ENCODE measurements at regions of chr15 and their contacts with region 1.

Region 1: GRCh38 chr15:41774062-41774881 is at the start of gene MAPKBP1:
- DNase-seq: peak; percentile 98
- H3K4me3 Mint-ChIP-seq: peak within 1 kb of the TSS; percentile 85
- H3K27ac Mint-ChIP-seq: peak within 1 kb of the TSS; percentile 91
- H3K4me1 Mint-ChIP-seq: peaks cover 56% of the 10 kb centered on the region
- H3K27me3 Mint-ChIP-seq: no peaks in the 10 kb centered on the region
- total RNA-seq, gene MAPKBP1: 13.8 to 13.9 TPM

Region 2: DNA sequence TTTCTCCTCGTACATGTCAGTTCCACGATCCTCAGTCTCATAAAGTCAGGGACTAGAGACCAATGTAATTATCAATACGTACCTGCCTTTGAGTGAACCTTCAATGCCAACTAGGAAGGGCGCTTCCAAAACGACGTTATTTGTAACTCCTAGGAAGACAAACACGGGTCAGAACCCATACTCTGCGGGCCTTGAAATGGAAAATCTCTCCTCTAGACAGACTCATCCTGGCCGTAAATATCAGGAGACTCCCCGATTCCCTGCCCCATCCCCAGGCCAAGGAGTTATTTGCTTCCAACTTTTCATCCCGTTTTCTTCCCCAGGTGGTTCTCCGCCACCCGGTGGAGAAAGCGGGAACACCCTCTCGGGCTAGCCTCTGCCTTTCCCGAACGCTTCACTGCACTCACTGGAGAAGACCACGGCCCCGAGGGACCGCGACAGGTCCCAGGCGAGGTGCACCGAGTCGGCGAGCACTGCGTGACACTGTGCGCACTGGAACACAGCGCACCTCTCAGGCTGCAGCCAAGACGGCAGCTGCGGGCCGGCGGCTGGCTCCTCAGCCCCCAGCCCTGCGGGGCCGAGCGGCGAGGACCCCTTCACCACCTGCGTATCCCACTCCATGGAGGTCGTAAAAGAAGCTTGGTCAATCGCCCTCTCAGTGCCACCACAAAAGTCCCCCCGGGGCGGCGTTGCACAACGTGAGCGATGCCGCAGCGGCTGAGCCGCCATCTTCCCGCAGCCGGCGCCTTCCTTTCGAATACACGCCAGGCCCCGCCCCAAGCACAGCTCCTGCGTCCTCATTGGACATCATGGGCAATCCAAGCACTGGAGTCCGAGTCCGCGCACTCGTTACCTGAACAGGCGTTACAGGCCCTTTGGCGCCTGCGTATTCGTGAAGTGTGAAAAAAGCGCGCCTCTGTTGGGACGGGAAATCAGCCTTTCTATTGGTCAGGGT is 442.2 kb before region 1 on chr15 and contains the start of gene OIP5:
- CTCF ChIA-PET with region 1: no interaction called
- intact Hi-C with region 1: loop called (anchors 1 kb)
- DNase-seq: peak; percentile 100
- H3K4me3 Mint-ChIP-seq: peak within 1 kb of the TSS; percentile 100
- H3K27ac Mint-ChIP-seq: peak within 1 kb of the TSS; percentile 98
- H3K4me1 Mint-ChIP-seq: peaks cover 26% of the 10 kb centered on the region
- H3K27me3 Mint-ChIP-seq: no peaks in the 10 kb centered on the region
- total RNA-seq, gene OIP5: 9.5 to 10.7 TPM

Region 3: DNA sequence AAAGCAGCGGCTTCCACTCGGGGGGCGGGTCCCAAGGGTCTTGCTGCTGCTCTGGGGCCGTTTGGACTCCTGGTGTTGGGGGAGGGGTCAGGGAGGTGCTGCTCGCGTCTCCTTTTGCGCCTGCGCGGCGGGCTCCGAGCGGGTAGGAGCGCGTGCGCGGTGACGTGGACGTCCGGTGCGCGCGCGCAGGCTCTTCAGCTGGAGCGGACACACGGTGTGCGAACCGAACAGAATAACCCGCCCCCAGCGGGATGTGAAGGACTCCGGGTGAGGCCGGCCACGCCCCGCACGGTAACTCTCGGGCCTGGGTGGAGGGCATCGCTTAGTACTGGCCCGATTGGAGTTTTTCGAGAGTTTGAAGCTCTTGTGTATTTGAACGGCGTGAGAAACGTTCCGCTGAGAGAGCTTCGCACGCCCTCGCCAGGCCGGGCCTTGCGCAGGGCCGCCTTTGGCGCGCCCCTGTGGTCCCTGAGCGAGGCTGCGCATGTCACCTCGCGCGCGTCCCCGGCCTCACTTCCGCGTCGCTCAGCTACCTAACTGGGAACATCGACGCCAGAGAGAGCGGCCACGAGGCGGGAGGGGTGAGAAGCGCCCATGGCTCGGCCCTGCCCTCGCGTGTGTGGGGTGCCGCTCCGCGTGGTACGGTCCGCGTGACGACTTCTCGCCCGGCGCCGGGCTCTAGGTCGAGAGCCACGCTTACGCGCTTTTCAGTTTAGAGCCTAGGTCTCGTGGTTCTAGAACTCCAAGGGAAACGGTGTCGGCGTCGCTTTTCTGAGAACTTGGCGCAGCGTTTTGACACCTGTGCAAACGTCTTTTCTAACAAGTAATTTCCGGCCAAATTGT is 113.8 kb before region 1 on chr15 and contains the start of gene MGA:
- CTCF ChIA-PET with region 1: interaction called, 3 read pairs
- intact Hi-C with region 1: loop called (anchors 1 kb)
- DNase-seq: peak; percentile 84
- H3K4me3 Mint-ChIP-seq: peak within 1 kb of the TSS; percentile 95
- H3K27ac Mint-ChIP-seq: peak within 1 kb of the TSS; percentile 81
- H3K4me1 Mint-ChIP-seq: peaks cover 32% of the 10 kb centered on the region
- H3K27me3 Mint-ChIP-seq: peaks cover 2% of the 10 kb centered on the region
- total RNA-seq, gene MGA: 27.4 to 28.3 TPM

Region 4: DNA sequence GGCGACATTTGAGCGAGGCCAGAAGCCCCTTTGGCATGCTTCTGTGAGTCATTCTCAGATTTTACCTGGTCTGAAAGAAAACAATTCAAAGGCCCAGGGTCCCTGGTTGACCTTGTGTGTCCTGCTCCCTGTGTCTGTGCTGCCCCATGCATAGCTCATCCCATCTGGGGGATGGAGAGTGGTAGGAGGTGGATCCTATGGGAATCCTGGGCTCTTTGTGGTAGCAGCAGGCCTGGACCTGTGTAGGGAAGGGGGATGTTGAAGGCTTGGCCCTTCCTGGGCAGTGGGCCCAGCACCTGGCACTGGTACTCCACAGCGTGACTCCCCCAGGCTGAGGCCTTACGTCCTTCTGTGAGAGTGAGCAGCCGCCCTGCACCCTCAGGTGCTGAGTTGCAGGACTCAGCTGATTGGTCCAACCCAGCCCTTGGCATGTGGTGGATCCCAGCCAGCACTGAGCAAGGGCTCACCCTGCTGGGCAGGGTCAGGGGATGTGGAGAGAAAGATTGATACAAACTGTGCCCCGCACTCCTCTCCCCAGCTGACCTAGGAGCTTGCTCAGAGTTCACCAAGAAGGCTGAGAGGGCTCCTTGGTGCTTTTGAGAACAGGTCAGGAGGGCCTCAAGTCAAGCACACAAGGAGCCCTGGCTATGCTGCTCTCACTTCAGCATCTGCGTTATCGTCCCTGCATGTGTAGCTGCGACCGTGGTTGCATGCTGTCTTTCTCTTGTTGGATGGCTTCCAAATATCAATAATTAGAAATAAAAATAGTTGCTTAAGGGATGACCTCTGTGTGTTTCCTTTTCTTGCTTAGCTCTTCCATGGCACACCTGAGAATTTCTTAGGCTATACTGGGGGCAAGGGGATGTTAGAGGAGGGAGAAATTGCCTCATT is 32.3 kb after region 1 on chr15:
- CTCF ChIA-PET with region 1: interaction called, 177 read pairs
- intact Hi-C with region 1: loop called (anchors 1 kb)
- DNase-seq: peak; percentile 25
- H3K4me3 Mint-ChIP-seq: no peak overlapping the region
- H3K27ac Mint-ChIP-seq: no peak overlapping the region
- H3K4me1 Mint-ChIP-seq: peaks cover 14% of the 10 kb centered on the region
- H3K27me3 Mint-ChIP-seq: no peaks in the 10 kb centered on the region

Region 5: DNA sequence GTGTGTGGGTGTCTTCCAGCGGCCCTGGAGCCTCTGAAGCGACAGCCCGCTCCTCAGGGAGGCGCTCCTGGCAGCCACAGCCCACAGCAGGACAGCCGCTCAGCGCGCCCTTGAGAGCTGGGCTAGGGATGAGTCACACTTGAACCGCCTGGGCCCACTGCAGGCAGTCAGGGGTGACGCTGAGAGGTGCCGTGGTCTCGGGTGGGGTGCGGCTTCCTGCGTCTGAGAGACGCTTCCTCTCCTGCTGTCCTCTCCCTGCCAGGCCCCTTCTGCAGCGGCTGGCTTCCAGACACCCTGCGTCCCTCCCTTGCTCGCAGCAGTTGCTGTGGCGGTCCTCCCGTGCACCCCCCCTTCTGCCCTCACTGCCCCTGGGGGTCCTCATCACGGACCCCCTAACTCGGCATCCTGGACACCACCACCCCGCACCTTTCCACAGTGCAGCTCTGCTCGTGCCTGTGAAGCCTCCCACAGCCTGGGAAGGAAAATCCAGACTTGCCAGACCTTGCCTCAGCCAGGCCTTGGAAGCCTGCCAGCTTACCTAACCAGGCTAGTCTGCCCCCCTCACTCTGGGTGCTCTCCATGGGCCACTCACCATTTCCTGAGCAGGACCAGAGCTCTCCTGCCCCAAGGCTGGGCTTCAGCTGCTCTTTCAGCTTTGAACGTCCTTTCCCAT is 120.7 kb after region 1 on chr15:
- CTCF ChIA-PET with region 1: interaction called, 10 read pairs
- intact Hi-C with region 1: no loop called
- DNase-seq: peak; percentile 85
- H3K4me3 Mint-ChIP-seq: peak overlapping the region; percentile 9
- H3K27ac Mint-ChIP-seq: peak overlapping the region; percentile 71
- H3K4me1 Mint-ChIP-seq: peaks cover 37% of the 10 kb centered on the region
- H3K27me3 Mint-ChIP-seq: no peaks in the 10 kb centered on the region

Region 6: GRCh38 chr15:41972253-41973242 is 198.3 kb after region 1 on chr15 and contains the start of gene EHD4:
- CTCF ChIA-PET with region 1: interaction called, 5 read pairs
- intact Hi-C with region 1: loop called (anchors 1 kb)
- DNase-seq: peak; percentile 97
- H3K4me3 Mint-ChIP-seq: peak within 1 kb of the TSS; percentile 88
- H3K27ac Mint-ChIP-seq: peak within 1 kb of the TSS; percentile 93
- H3K4me1 Mint-ChIP-seq: peaks cover 42% of the 10 kb centered on the region
- H3K27me3 Mint-ChIP-seq: peaks cover 8% of the 10 kb centered on the region
- total RNA-seq, gene EHD4: 30.1 to 31.8 TPM

Measured in activated naive CD4-positive, alpha-beta T cell treated with anti-CD3 and anti-CD28 coated beads for 36 hours (primary cell).